Mammary epithelial cell (primary cell): ENCODE measurements at regions of chr15 and their contacts with region 1.

Region 1: DNA sequence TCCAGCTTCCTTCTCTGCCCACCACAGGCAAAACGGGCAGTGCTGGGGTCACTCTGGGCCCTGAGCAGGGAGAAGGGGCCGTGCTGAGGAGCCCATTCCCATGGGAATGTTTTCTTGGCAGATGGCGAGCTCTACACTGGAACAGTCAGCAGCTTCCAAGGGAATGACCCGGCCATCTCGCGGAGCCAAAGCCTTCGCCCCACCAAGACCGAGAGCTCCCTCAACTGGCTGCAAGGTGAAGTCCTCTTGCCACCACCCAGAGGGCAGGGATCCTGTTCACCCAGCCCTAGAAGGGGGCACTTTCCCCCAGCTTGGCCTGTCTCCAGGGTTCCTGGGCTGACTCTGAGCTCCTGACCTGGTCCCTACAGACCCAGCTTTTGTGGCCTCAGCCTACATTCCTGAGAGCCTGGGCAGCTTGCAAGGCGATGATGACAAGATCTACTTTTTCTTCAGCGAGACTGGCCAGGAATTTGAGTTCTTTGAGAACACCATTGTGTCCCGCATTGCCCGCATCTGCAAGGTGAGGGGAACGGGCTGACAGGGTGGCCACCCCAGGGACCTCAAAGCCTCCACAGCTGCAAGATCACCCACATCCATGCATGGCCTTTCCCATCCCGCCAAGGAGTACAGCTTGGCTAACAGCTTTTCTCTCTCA is 12.4 kb downstream of the CIB1 start:
- DNase-seq: no peak
- H3K4me3 ChIP-seq: no peak overlapping the region
- H3K27ac ChIP-seq: no peak overlapping the region
- H3K4me1 ChIP-seq: peaks cover 11% of the 10 kb centered on the region
- H3K27me3 ChIP-seq: no peaks in the 10 kb centered on the region
- CTCF ChIP-seq: peak; percentile 59 to 81

Region 2: GRCh38 chr15:89750560-89751542 is 470.5 kb before region 1 on chr15 and contains the start of gene MESP1:
- CTCF ChIA-PET with region 1: no interaction called
- dilution Hi-C with region 1: loop called (anchors 5 kb)
- in situ Hi-C with region 1: no loop called
- intact Hi-C with region 1: no loop called
- DNase-seq: peak; percentile 85
- H3K4me3 ChIP-seq: peak within 1 kb of the TSS; percentile 44 to 65 (median 58)
- H3K27ac ChIP-seq: no peak within 1 kb of the TSS
- H3K4me1 ChIP-seq: peaks cover 16% of the 10 kb centered on the region
- H3K27me3 ChIP-seq: no peaks in the 10 kb centered on the region
- CTCF ChIP-seq: peak; percentile 42 to 79
- total RNA-seq, gene MESP1: under 0.01 TPM in 1 of 2 donors, not detected in the other

Region 3: DNA sequence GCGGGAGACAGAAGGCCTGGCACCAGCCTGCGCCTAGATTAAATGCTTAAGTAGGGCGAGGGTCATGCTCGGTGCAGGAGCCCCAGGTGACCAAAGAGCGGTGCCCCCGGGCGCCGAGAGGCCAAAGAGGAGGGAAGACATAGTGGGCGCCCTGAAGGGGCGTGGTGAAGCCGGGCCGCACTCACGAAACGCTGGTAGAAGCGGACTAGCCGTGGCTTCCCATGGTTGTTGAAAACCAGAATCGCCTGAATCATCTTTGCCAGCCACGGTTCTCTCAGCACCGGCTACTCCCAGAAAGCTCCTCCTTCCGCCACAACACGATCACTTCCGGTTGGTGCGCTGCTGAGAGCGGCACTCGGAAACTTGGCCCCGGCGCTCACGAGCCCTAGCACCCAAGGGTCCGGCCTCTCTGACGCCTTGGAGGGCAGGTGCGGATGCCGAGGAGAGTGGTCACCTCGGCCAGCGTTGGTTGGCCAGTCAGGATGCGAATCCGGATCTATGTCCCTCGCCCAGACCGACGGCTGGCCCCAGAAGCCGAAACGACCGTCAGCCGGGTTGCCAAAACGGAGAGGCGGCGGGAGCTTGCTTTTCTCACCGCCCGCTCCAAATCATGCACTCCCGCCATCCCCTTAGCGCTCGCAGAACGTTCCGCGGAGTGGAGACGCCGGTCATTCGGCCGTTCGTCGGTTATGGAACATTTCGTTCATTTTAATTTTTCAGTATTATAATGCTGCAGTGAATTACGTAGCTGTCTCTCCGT is 327.5 kb before region 1 on chr15 and contains the start of gene AP3S2:
- CTCF ChIA-PET with region 1: no interaction called
- dilution Hi-C with region 1: no loop called
- in situ Hi-C with region 1: no loop called
- intact Hi-C with region 1: loop called (anchors 10 kb)
- DNase-seq: peak; percentile 96
- H3K4me3 ChIP-seq: peak within 1 kb of the TSS; percentile 83 to 93 (median 91)
- H3K27ac ChIP-seq: peak within 1 kb of the TSS; percentile 92
- H3K4me1 ChIP-seq: peaks cover 6% of the 10 kb centered on the region
- H3K27me3 ChIP-seq: no peaks in the 10 kb centered on the region
- CTCF ChIP-seq: no peak
- total RNA-seq, gene AP3S2: 34.6 to 53.0 TPM

Region 4: GRCh38 chr15:90101969-90102890 is 119.1 kb before region 1 on chr15 and contains the start of gene IDH2:
- CTCF ChIA-PET with region 1: no interaction called
- dilution Hi-C with region 1: loop called (anchors 5 kb)
- in situ Hi-C with region 1: no loop called
- intact Hi-C with region 1: no loop called
- DNase-seq: peak; percentile 78
- H3K4me3 ChIP-seq: peak within 1 kb of the TSS; percentile 48 to 71 (median 66)
- H3K27ac ChIP-seq: peak within 1 kb of the TSS; percentile 24
- H3K4me1 ChIP-seq: peaks cover 39% of the 10 kb centered on the region
- H3K27me3 ChIP-seq: no peaks in the 10 kb centered on the region
- CTCF ChIP-seq: no peak
- total RNA-seq, gene IDH2: 16.4 to 39.5 TPM

Region 5: DNA sequence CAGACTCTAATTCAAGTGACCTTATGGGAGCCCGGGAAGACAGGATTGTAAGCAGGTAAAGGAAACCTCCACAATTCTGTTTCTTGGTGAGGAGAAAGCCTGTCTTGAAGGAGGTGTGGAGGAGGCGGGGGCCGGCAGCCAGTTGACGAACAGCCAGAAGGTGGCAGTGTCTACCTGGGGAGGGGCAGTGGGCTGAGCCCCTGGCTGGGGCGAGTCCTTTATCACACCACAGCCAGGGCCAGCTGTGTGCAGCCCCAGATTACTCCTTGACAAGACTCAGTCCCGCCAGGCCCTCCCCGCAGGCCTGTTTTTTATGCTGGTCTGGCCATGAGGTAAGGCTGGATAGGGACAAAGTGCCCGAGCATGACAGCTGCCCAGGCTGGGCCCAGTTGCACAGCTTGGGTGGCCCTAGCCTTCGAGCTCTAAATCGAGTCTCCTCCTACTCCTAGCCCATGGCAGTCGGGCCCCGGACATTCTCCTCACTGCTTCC is 78.2 kb before region 1 on chr15:
- CTCF ChIA-PET with region 1: no interaction called
- dilution Hi-C with region 1: no loop called
- in situ Hi-C with region 1: no loop called
- intact Hi-C with region 1: loop called (anchors 1 kb)
- DNase-seq: peak; percentile 48
- H3K4me3 ChIP-seq: no peak overlapping the region
- H3K27ac ChIP-seq: no peak overlapping the region
- H3K4me1 ChIP-seq: peaks cover 10% of the 10 kb centered on the region
- H3K27me3 ChIP-seq: no peaks in the 10 kb centered on the region
- CTCF ChIP-seq: peak; percentile 56 to 78

Region 6: GRCh38 chr15:90165659-90166421 is 55.5 kb before region 1 on chr15:
- CTCF ChIA-PET with region 1: interaction called, 4 read pairs
- dilution Hi-C with region 1: no loop called
- in situ Hi-C with region 1: loop called (anchors 5 kb)
- intact Hi-C with region 1: no loop called
- DNase-seq: peak; percentile 100
- H3K4me3 ChIP-seq: no peak overlapping the region
- H3K27ac ChIP-seq: peak overlapping the region; percentile 71
- H3K4me1 ChIP-seq: peaks cover 39% of the 10 kb centered on the region
- H3K27me3 ChIP-seq: no peaks in the 10 kb centered on the region
- CTCF ChIP-seq: no peak

Region 7: DNA sequence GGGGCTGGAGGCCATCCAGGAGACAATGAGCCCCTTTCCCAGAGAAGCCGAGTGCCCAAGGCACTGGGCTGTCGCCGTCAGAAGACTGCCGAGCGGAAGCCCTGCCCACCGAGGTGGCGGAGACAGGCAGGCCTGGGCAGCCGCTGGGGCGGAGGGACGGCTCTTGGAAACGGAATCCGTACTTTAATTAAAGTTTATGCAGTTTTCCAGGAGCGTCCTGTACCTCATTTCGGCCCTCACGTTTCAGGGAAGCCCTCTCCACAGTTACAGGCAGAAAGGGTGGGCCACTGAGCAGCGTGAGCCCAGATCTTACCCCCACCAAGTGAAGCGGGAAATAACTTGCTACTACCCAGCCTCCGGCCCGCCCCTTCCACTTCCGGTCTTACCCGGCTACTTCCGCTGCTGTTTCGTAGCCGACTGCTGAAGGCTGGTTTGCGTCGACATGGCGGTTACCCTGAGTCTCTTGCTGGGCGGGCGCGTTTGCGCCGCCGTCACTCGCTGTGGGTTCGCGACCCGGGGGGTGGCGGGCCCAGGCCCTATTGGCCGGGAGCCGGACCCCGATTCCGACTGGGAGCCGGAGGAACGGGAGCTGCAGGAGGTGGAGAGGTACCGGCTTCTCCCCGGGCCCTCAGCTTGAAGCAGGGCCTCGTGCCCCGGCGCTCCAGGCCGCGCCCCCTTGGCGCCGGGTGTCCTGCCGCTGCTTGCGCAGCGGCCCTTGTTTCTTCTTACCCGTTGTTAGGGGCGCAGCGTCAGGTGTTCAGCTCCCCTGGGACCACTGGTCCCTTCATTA is 44.1 kb after region 1 on chr15 and contains the start of gene NGRN:
- CTCF ChIA-PET with region 1: no interaction called
- dilution Hi-C with region 1: no loop called
- in situ Hi-C with region 1: no loop called
- intact Hi-C with region 1: no loop called
- DNase-seq: peak; percentile 90
- H3K4me3 ChIP-seq: peak within 1 kb of the TSS; percentile 55 to 64 (median 58)
- H3K27ac ChIP-seq: peak within 1 kb of the TSS; percentile 70
- H3K4me1 ChIP-seq: peaks cover 37% of the 10 kb centered on the region
- H3K27me3 ChIP-seq: no peaks in the 10 kb centered on the region
- CTCF ChIP-seq: no peak
- total RNA-seq, gene NGRN: 55.3 to 77.2 TPM